Endothelial cell of umbilical vein (primary cell): ENCODE measurements at regions of chr3 and their contacts with region 1.

Region 1: GRCh38 chr3:45817831-45818522 is 21.6 kb upstream of the SLC6A20 start:
- DNase-seq: peak; percentile 87
- H3K4me3 ChIP-seq: no peak overlapping the region
- H3K27ac ChIP-seq: peak overlapping the region; percentile 50
- H3K4me1 ChIP-seq: peaks cover 15% of the 10 kb centered on the region
- H3K27me3 ChIP-seq: no peaks in the 10 kb centered on the region
- CTCF ChIP-seq: no peak
- POLR2A ChIP-seq: no peak

Region 2: DNA sequence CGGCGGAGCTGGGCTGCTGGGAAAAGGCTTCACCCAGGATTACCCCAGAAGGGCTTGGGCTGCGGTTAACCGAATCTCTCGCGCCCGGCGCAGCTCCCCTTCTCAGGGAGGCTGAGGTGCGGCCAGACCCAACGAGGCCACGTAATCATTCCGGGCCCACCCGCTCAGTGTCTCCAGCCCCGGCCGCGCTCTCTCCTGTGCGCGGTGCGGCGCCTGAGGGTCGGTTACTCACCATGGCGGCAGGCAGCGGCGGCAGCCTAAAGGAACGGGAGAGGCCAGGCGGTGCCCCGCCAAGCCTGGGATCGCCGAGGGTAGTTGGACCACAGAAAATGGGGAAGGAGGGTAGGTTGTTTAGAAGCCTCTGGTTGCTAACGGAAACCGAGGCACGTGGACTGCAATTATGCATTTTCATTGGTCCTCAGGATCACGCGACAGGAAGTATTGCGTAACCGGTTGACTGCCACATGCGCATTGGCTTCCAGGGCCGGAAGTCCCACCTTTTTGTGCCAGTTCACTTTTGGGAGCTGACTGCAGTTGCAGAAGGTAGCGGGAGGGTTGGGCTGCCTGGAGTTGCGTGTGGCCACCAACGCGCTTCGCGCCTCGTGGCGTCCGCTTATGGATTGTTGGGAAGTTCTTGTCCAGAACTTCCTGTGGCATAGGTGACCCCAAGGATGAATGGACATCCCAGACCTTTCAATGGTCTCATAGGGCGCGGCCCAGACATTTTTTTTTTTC is 23.9 kb after region 1 on chr3 and contains the start of gene LZTFL1:
- CTCF ChIA-PET with region 1: interaction called, 7 read pairs
- POLR2A ChIA-PET with region 1: no interaction called
- dilution Hi-C with region 1: no loop called
- intact Hi-C with region 1: loop called (anchors 1 kb)
- DNase-seq: peak; percentile 95
- H3K4me3 ChIP-seq: peak within 1 kb of the TSS; percentile 27 to 79 (median 69)
- H3K27ac ChIP-seq: peak within 1 kb of the TSS; percentile 46
- H3K4me1 ChIP-seq: peaks cover 5% of the 10 kb centered on the region
- H3K27me3 ChIP-seq: peaks cover 3 to 8% of the 10 kb centered on the region in 2 experiments
- CTCF ChIP-seq: no peak
- POLR2A ChIP-seq: peak; percentile 62
- total RNA-seq, gene LZTFL1: 15.1 and 18.2 TPM in 2 replicates